AG04449 (cell line): ENCODE measurements at regions of chr2 and their contacts with region 1.

Region 1: GRCh38 chr2:29309090-29310029 is 194.1 kb downstream of the CLIP4 start:
- DNase-seq: no peak
- H3K4me3 ChIP-seq: no peak overlapping the region
- CTCF ChIP-seq: peak; percentile 73

Region 2: DNA sequence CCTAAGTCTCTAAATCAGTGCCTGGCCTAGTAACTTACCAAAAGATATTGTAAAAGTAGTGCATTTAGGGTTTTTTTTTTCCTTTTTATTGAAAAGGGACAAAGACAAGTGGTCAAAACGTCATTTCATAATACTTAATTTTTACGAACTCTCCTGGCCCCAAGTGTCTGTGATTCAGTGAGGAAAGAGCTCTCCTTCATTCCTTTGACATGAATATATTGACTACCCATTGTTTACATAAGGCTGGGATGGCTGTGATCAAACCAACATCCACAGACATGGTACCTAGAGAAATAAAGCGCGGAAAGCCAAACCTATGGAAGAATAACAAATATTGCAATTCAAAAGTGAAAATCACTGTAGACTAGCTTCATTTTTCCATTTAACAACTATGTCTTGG is 1220.4 kb before region 1 on chr2:
- CTCF ChIA-PET with region 1: no interaction called
- POLR2A ChIA-PET with region 1: no interaction called
- DNase-seq: no peak
- H3K4me3 ChIP-seq: no peak overlapping the region
- CTCF ChIP-seq: no peak

Region 3: GRCh38 chr2:29284671-29285070 is 24.7 kb before region 1 on chr2:
- CTCF ChIA-PET with region 1: interaction called, 17 read pairs
- POLR2A ChIA-PET with region 1: no interaction called
- DNase-seq: no peak
- H3K4me3 ChIP-seq: no peak overlapping the region
- CTCF ChIP-seq: no peak

Region 4: GRCh38 chr2:29295857-29296256 is 13.5 kb before region 1 on chr2:
- CTCF ChIA-PET with region 1: interaction called, 11 read pairs
- POLR2A ChIA-PET with region 1: no interaction called
- DNase-seq: no peak
- H3K4me3 ChIP-seq: no peak overlapping the region
- CTCF ChIP-seq: peak; percentile 41

Region 5: DNA sequence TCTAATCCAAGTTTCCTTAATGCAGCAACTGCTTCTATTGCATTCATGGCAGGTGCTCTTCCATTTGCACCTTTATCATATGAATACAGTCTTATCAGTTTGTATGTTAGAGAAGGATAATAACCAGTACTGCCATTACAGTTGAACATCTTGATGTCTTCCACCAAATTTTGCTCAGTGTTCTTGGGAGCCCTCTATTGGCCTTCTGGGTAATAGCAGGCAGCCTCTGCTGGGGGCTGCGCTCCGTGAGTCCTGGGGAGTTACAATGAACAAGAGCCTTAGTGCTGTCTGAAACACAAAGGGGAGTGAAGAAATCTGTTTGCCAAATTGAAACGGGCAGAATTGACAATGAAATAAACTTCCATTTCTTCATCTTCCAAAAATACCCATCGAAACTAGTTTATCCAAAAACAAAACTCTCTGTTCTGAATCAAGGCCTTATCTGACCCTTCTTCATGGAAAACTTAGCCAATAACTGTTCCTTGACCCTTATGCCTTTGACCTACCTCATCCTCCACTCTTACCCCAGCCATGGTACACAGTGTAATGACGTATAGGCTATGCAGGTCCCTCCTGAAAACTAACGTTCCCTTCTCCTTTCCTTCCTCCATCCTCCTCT is 532.1 kb after region 1 on chr2:
- CTCF ChIA-PET with region 1: interaction called, 27 read pairs
- POLR2A ChIA-PET with region 1: no interaction called
- DNase-seq: no peak
- H3K4me3 ChIP-seq: no peak overlapping the region
- CTCF ChIP-seq: peak; percentile 88